ENCODE measurements at regions of chr11 and their contacts with region 1.

Region 1: DNA sequence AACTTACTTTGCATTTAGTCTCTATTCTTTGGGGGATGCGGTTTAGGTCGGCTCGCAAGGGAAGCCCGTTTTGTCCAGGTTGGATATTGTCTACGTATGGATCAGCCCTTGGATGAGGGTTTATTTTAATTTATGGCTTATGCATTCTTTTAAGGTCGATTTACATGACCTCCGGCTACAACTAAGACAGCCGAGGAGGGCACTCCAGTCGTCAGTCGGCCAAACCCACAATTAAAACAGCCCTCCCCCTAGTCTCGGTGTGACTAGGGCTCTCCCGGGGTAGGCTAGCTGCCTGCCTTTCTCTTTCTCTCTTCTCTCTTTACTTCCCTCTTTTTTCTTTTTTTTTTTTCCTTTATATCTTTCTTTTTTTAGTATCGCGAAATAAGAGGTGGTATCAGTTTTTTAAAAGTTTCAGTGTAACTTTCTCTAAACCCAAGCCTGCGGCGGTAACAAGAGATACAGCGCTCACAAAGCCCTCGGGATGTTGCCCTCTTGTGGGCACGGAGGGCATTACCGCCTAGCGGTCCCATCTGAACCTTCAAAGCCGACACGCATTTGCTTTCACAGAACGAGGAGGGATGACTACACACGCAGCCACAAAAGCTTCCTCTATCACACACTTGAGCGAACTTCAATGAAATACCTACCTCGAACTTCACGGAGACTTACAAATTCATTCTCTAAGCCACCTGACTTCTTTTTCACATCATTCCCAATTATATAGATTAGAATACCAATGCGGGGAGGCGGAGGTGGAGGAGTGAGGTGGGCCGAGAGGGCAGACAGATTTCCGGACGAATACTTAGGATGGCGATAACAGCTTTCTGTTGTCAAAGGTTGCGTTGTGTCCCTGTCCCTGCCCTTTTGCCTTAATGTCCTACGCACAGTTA is 132.3 kb upstream of the C11orf58 start:
- DNase-seq: peak; percentile 93
- ATAC-seq: peak; percentile 94
- H3K4me3 Mint-ChIP-seq: peak overlapping the region; percentile 69
- H3K27ac Mint-ChIP-seq: peak overlapping the region; percentile 67
- H3K4me1 Mint-ChIP-seq: peaks cover 22% of the 10 kb centered on the region
- H3K27me3 Mint-ChIP-seq: peaks cover 43% of the 10 kb centered on the region

Region 2: GRCh38 chr11:14974515-14975251 is 1631.5 kb before region 1 on chr11:
- CTCF ChIA-PET with region 1: no interaction called
- POLR2A ChIA-PET with region 1: no interaction called
- intact Hi-C with region 1: loop called in 1 of 2 experiments (anchors 10 kb)
- DNase-seq: peak; percentile 85
- ATAC-seq: peak; percentile 72
- H3K4me3 Mint-ChIP-seq: peak overlapping the region; percentile 54
- H3K27ac Mint-ChIP-seq: no peak overlapping the region
- H3K4me1 Mint-ChIP-seq: peaks cover 27% of the 10 kb centered on the region
- H3K27me3 Mint-ChIP-seq: peaks cover 67% of the 10 kb centered on the region

Region 3: DNA sequence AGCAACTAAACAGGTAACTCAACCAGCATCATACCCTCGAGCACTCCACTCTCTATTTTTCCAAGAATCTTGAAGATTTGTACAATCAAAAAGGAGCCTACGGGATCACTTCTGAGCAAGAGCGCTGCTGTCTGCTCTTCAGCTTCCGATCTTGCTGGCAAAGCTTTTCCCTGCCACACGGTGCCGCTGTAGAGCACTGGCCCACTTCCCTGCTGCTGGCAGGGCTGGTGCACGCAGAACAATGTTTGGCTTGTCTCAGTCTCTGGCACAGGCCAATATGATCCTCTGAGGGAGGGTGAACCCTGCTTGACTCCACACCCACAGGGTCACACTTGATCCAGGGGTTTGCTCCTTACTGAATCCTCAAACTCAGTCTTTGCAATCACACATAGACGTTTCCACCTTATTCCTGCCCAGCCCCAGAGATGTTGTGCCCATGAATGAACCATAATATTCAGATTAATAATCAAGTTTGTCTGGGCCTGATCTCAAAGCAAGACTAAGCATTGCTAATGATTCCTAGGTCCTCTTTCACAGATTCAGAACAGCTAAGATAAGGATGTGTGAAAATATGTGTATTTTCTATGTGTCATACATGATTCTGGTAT is 786.4 kb before region 1 on chr11:
- CTCF ChIA-PET with region 1: no interaction called
- POLR2A ChIA-PET with region 1: no interaction called
- intact Hi-C with region 1: loop called (anchors 5 kb)
- DNase-seq: peak; percentile 70
- ATAC-seq: peak; percentile 68
- H3K4me3 Mint-ChIP-seq: no peak overlapping the region
- H3K27ac Mint-ChIP-seq: no peak overlapping the region
- H3K4me1 Mint-ChIP-seq: peaks cover 15% of the 10 kb centered on the region
- H3K27me3 Mint-ChIP-seq: peaks cover 15% of the 10 kb centered on the region

Region 4: DNA sequence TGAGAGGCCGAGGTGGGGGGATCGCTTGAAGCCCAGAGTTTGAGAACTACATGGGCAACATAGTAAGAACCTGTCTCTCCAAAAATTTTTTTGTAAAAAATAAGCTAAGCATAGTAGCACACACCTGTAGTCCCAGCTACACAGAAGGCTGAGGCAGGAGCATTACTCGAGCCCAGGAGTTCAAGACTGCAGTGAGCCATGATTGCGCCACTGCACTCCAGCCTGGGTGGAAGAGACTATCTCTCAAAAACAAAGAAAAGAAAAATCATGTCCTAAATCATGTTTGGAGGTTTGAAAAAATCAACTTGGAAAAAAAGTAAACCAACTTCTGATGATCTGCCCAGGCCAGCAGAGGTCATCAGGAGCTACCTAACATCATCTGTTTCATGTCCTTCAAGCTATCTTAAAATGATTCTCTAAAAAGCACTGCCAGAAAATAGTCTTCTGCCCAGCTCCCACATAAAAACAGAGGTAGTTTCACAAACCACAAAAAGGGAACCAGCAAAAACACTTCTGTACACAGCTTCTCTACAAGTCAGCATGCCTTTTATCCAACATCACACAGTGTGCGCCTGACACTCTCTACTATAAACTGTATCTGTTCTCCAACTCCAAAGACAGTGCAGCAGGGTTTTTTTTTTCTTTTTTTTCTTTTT is 414.8 kb before region 1 on chr11:
- CTCF ChIA-PET with region 1: no interaction called
- POLR2A ChIA-PET with region 1: no interaction called
- intact Hi-C with region 1: loop called in 1 of 2 experiments (anchors 5 kb)
- DNase-seq: no peak
- ATAC-seq: no peak
- H3K4me3 Mint-ChIP-seq: no peak overlapping the region
- H3K27ac Mint-ChIP-seq: no peak overlapping the region
- H3K4me1 Mint-ChIP-seq: no peaks in the 10 kb centered on the region
- H3K27me3 Mint-ChIP-seq: no peaks in the 10 kb centered on the region